Thyroid gland (tissue), 4 donors: ENCODE measurements at regions of chr5 and their contacts with region 1.

Region 1: GRCh38 chr5:56918054-56918453 is 8.7 kb downstream of the SETD9 start:
- DNase-seq: no peak
- H3K4me3 ChIP-seq: no peak overlapping the region
- H3K27ac ChIP-seq: no peak overlapping the region
- H3K4me1 ChIP-seq: no peaks in the 10 kb centered on the region
- H3K27me3 ChIP-seq: no peaks in the 10 kb centered on the region
- CTCF ChIP-seq: no peak
- POLR2A ChIP-seq: no peak

Region 2: DNA sequence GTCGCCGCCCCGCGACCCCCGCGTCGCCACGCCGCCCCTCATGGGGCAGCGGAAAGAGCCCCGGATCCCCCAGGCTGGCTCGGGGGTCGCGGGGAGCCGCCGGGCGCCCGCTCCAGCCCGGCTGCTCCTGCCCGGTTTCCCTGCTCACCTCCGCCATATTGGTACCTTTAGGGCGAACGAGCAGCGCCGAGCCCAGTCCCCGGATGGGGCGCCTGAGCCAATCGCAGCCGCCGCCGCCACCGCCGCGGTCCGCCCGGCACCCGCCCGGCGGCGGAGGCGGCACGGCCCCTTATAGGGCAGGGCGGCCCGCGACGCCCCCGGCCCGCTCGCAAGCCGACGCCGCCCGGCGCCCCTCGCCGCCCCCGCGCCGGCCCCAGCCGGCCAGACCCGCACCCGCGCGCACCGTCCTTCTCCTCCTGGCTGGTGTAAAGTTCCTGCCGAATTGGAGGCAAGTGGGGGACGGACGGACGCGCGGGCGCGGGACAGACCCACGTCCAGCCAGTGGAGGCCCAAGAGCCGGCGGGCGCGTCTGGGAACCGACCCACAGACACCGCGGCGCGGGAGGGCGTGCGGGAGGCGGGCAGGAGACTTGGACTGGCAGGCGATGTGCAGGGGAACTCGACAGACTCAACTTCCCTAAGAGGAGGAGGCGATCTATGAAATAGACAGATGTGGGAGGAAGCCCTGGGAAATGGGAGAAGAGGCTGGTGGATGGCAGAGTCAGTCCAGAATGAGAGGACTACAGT is 34.1 kb after region 1 on chr5 and contains the start of gene MIER3:
- intact Hi-C with region 1: loop called (anchors 5 kb)
- DNase-seq: peak; percentile 73 to 81
- H3K4me3 ChIP-seq: peak within 1 kb of the TSS; percentile 69 to 81 (median 70)
- H3K27ac ChIP-seq: peak within 1 kb of the TSS; percentile 65 to 89 (median 87)
- H3K4me1 ChIP-seq: peaks cover 11 to 12% of the 10 kb centered on the region in 2 donors
- H3K27me3 ChIP-seq: no peaks in the 10 kb centered on the region
- CTCF ChIP-seq: no peak
- POLR2A ChIP-seq: peak in 1 of 2 donors; percentile 62
- total RNA-seq, gene MIER3: 24.7 to 54.9 (median 29.7) TPM